GM12878 (cell line): ENCODE measurements at regions of chr6 and their contacts with region 1.

Region 1: GRCh38 chr6:166999145-166999883 is at the start of gene CEP43:
- DNase-seq: peak; percentile 71
- ATAC-seq: peak; percentile 92
- H3K4me3 ChIP-seq: peak within 1 kb of the TSS; percentile 91
- H3K27ac ChIP-seq: peak within 1 kb of the TSS; percentile 69
- H3K4me1 ChIP-seq: peaks cover 3% of the 10 kb centered on the region; the same call in 1 of the 2 replicates
- H3K27me3 ChIP-seq: no peaks in the 10 kb centered on the region
- CTCF ChIP-seq: no peak
- EP300 ChIP-seq: no peak
- POLR2A ChIP-seq: peak; percentile 73
- RAD21 ChIP-seq: no peak
- polyA plus RNA-seq, gene CEP43: 7.7 to 11.4 TPM

Region 2: GRCh38 chr6:166683477-166683876 is 315.8 kb before region 1 on chr6:
- CTCF ChIA-PET with region 1: no interaction called
- POLR2A ChIA-PET with region 1: no interaction called
- RAD21 ChIA-PET with region 1: no interaction called
- SMC1A ChIA-PET with region 1: no interaction called
- in situ Hi-C with region 1: no loop called
- intact Hi-C with region 1: no loop called
- DNase-seq: no peak
- ATAC-seq: no peak
- H3K4me3 ChIP-seq: no peak overlapping the region
- H3K27ac ChIP-seq: no peak overlapping the region
- H3K4me1 ChIP-seq: no peaks in the 10 kb centered on the region
- H3K27me3 ChIP-seq: peaks cover 0 to 3% of the 10 kb centered on the region in 2 experiments; a peak in 1 of 4 replicates
- CTCF ChIP-seq: no peak
- EP300 ChIP-seq: no peak
- POLR2A ChIP-seq: no peak
- RAD21 ChIP-seq: no peak

Region 3: DNA sequence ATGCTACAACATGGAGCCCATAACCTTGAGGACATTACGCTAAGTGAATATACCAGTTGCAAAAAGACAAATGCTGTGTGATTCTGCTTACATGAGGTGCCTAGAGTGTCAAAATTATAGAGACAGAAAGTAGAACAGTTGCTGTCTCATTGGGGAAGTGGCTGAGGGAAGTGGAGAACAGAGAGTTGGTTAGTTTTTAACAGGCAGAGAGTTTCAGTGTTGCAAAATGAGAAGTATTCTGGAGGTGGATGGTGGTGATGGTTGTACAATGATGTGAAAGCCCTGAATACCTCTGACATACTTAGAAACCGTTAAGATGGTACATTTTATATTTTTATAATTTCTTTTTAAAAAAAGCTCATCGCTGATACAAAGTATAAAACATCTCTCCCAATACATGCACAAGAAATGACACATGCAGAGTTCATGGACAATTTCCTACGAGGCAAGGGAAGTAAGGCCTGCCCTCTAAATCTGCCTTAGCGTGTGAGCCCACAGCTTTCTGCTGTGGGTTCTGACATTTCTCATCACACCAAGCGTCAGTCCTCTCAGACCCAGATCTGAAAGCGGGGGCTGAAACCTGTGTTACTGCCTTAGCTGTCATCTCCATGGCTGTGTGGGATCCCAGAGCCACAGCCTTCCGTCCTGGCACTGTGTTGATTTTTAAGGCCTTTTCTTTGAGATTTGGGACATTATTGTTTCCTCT is 169.0 kb before region 1 on chr6:
- CTCF ChIA-PET with region 1: interaction called, 3 read pairs
- POLR2A ChIA-PET with region 1: no interaction called
- RAD21 ChIA-PET with region 1: no interaction called
- SMC1A ChIA-PET with region 1: interaction called, 3 read pairs
- in situ Hi-C with region 1: no loop called
- intact Hi-C with region 1: loop called (anchors 5 kb)
- DNase-seq: peak; percentile 80
- ATAC-seq: peak; percentile 94
- H3K4me3 ChIP-seq: peak overlapping the region; percentile 3; the same call in 1 of the 2 replicates
- H3K27ac ChIP-seq: peak overlapping the region; percentile 99
- H3K4me1 ChIP-seq: peaks cover 19% of the 10 kb centered on the region
- H3K27me3 ChIP-seq: no peaks in the 10 kb centered on the region
- CTCF ChIP-seq: no peak
- EP300 ChIP-seq: peak; percentile 28 to 35; a peak in 2 of 4 replicates
- POLR2A ChIP-seq: no peak; the same call in 1 of the 2 replicates
- RAD21 ChIP-seq: no peak

Region 4: GRCh38 chr6:166956444-166957086 is 42.7 kb before region 1 on chr6 and contains the start of gene RNASET2:
- CTCF ChIA-PET with region 1: interaction called, 7 read pairs
- POLR2A ChIA-PET with region 1: interaction called, 9 read pairs
- RAD21 ChIA-PET with region 1: interaction called, 25 read pairs
- SMC1A ChIA-PET with region 1: interaction called, 14 read pairs
- in situ Hi-C with region 1: no loop called
- intact Hi-C with region 1: loop called (anchors 2 kb)
- DNase-seq: no peak
- ATAC-seq: peak; percentile 83
- H3K4me3 ChIP-seq: peak within 1 kb of the TSS; percentile 94
- H3K27ac ChIP-seq: peak within 1 kb of the TSS; percentile 94
- H3K4me1 ChIP-seq: peaks cover 49% of the 10 kb centered on the region
- H3K27me3 ChIP-seq: no peaks in the 10 kb centered on the region
- CTCF ChIP-seq: no peak
- EP300 ChIP-seq: no peak
- POLR2A ChIP-seq: peak; percentile 91
- RAD21 ChIP-seq: no peak
- polyA plus RNA-seq, gene RNASET2: 5.5 to 17.8 TPM

Region 5: DNA sequence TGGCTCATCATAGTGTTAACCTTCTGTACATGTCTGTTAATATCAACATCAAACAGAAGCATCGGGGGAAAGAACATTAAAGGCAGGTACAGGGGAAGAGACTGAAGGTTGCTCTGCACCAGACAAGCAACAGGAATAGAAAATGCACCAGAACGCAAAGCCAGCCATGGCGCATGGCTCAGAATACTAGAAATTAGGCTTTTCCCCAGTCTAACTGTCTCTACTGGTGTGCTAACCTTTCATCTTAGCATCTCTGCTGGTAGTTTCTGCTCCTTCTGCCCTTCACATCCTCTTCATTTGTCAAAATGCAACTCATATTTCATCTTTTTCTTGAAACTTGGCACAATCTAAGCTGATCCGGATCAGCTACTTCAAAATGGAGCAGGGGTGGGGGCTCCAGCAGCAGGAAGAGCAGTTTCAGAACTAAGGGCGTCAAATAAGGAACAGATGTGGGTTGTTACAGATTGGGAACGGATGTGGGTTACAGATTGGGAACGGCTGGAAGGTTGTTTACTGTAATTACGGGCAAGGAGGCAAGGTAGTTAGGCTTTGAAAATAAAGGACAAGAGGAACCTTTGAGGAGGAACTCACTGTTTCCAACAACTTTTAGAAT is 29.8 kb before region 1 on chr6:
- CTCF ChIA-PET with region 1: no interaction called
- POLR2A ChIA-PET with region 1: no interaction called
- RAD21 ChIA-PET with region 1: no interaction called
- SMC1A ChIA-PET with region 1: no interaction called
- in situ Hi-C with region 1: no loop called
- intact Hi-C with region 1: no loop called
- DNase-seq: no peak
- ATAC-seq: no peak
- H3K4me3 ChIP-seq: no peak overlapping the region
- H3K27ac ChIP-seq: no peak overlapping the region
- H3K4me1 ChIP-seq: peaks cover 3% of the 10 kb centered on the region; the same call in 1 of the 2 replicates
- H3K27me3 ChIP-seq: no peaks in the 10 kb centered on the region
- CTCF ChIP-seq: no peak
- EP300 ChIP-seq: no peak
- POLR2A ChIP-seq: no peak
- RAD21 ChIP-seq: no peak

Region 6: DNA sequence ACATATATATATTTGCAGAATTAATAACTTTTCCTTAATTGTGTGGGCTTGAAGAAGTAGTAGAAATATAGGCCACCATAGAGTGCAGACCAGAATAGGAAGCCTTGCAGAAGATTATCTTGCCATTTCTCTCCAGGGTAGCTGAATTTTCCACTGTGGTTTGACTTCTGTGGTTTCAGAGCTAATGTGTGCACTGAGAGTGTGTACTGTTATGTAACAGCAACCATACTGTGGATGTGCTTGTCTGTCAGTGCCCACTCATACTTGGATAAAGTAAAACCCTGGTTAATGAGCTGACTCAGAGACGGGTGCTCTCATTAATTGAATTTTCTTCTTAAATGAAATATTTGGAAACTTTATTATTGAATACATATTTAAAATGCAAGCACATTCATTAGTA is 57.1 kb after region 1 on chr6:
- CTCF ChIA-PET with region 1: interaction called, 3 read pairs
- POLR2A ChIA-PET with region 1: no interaction called
- RAD21 ChIA-PET with region 1: interaction called, 3 read pairs
- SMC1A ChIA-PET with region 1: interaction called, 13 read pairs
- in situ Hi-C with region 1: no loop called
- intact Hi-C with region 1: no loop called
- DNase-seq: peak; percentile 76
- ATAC-seq: peak; percentile 99
- H3K4me3 ChIP-seq: no peak overlapping the region
- H3K27ac ChIP-seq: no peak overlapping the region
- H3K4me1 ChIP-seq: peaks cover 9% of the 10 kb centered on the region; the same call in 1 of the 2 replicates
- H3K27me3 ChIP-seq: no peaks in the 10 kb centered on the region
- CTCF ChIP-seq: no peak
- EP300 ChIP-seq: peak in 1 of 2 experiments; percentile 75; a peak in 2 of 4 replicates
- POLR2A ChIP-seq: no peak
- RAD21 ChIP-seq: no peak

Region 7: DNA sequence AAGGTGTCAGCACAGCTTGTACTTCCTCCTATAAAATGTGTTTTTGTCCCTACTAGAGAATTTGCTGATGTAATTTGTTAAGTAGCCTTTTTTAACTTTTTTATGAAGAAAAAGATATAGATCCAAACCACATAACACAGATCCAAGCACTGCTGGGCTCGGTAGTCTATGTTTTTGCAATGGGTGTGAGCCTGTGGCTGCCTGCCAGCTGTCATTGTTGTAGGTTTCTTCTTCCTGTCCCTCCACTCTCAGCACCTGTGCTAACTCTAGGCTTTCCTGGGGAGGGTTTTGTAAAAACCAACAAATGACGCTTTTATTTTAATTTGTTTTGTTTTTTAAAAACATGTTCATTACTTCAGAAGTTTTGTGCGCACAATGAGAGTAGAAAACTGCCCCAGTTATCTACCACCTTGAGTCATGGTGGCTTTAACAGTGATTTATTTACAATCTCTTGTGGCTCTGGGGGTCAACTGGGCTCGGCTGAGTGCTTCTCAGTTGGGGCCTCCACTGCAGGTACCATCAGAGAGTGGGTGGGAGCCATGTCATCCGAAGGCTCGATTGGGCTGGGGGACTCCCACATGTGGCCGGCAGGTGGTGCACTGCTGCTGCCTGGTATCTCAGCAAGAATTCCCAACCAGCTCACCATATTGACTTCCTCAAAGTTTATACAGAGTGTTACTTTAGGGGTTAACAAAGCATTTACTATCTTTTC is 120.5 kb after region 1 on chr6:
- CTCF ChIA-PET with region 1: interaction called, 14 read pairs
- POLR2A ChIA-PET with region 1: interaction called, 16 read pairs
- RAD21 ChIA-PET with region 1: interaction called, 60 read pairs
- SMC1A ChIA-PET with region 1: interaction called, 55 read pairs
- in situ Hi-C with region 1: loop called (anchors 25 kb)
- intact Hi-C with region 1: loop called (anchors 5 kb)
- DNase-seq: no peak
- ATAC-seq: no peak
- H3K4me3 ChIP-seq: no peak overlapping the region
- H3K27ac ChIP-seq: peak overlapping the region; percentile 66; the same call in 1 of the 2 replicates
- H3K4me1 ChIP-seq: peaks cover 69% of the 10 kb centered on the region
- H3K27me3 ChIP-seq: no peaks in the 10 kb centered on the region
- CTCF ChIP-seq: peak; percentile 18 to 58 (median 56); a peak in 5 of 6 replicates
- EP300 ChIP-seq: no peak
- POLR2A ChIP-seq: no peak
- RAD21 ChIP-seq: peak; percentile 30

Region 8: DNA sequence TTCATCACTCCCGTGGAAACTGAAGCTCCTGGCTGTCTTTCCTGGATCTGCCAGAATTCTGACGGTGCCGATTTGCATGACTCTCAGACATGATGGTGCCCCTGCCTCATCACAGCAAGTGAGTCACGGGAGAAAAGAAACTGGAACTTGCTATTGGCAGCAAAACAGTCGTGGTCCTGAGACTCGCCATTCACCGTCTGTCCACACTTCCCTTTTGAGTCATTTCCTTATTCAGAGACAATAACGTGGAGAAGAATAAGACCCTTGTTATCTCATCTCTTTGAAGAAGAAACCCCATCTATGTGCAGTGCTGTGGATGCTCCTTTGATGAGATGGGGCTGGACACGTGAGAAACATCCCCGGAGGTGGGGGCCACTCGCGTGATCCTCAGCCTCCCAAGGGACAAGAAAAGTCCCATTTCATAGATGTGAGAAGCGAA is 154.2 kb after region 1 on chr6:
- CTCF ChIA-PET with region 1: interaction called, 5 read pairs
- POLR2A ChIA-PET with region 1: interaction called, 4 read pairs
- RAD21 ChIA-PET with region 1: interaction called, 5 read pairs
- SMC1A ChIA-PET with region 1: interaction called, 3 read pairs
- in situ Hi-C with region 1: loop called (anchors 25 kb)
- intact Hi-C with region 1: loop called (anchors 1 kb)
- DNase-seq: peak; percentile 78
- ATAC-seq: peak; percentile 71
- H3K4me3 ChIP-seq: peak overlapping the region; percentile 54
- H3K27ac ChIP-seq: peak overlapping the region; percentile 70
- H3K4me1 ChIP-seq: peaks cover 30% of the 10 kb centered on the region
- H3K27me3 ChIP-seq: no peaks in the 10 kb centered on the region; a peak in 1 of 4 replicates
- CTCF ChIP-seq: no peak
- EP300 ChIP-seq: peak; percentile 81; a peak in 3 of 4 replicates
- POLR2A ChIP-seq: no peak
- RAD21 ChIP-seq: no peak